ENCODE measurements at regions of chr3 and their contacts with region 1.

Region 1: DNA sequence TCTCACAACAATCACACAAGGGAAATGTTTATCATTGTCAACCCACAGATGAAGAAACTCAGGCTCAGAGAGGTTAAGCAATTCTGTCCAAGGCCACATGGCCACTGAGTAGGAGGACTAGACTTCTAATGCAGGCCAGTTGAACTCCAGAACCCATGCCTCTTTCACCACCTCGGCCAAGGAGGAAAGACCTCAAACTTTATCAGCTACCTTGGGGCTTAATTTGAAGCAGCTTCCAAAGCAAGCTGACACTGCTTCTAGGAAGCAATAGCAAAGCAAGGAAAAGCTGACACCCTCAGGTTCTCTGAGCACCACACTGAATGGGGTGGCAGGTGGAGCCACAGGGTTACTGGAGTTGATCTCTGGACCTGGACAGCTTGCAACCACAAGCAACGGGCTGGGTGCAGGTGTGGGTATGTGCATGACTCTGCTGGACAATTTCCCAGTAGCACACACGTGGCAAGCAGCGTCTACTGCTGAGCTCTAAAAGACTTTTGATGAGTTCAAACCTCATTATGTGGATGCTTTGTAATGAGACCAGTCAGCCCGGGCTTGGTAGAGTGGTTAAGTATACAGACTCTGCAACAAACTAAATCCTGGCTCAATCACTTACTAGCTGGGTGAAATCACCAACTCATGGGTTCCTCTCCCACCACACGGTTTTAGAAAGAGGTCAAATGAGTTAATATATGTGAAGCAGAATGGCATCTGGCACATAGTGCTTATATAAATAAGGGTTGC is 23.1 kb downstream of the CCNL1 start:
- DNase-seq: no peak
- H3K4me3 ChIP-seq: no peak overlapping the region
- H3K27ac ChIP-seq: no peak overlapping the region
- H3K4me1 ChIP-seq: peaks cover 4 to 27% of the 10 kb centered on the region in 2 experiments; a peak in 3 of 4 replicates
- H3K27me3 ChIP-seq: no peaks in the 10 kb centered on the region
- CTCF ChIP-seq: no peak
- EP300 ChIP-seq: no peak
- RAD21 ChIP-seq: no peak

Region 2: GRCh38 chr3:155995525-155996351 is 1141.1 kb before region 1 on chr3:
- CTCF ChIA-PET with region 1: interaction called, 10 read pairs
- POLR2A ChIA-PET with region 1: no interaction called
- DNase-seq: peak; percentile 54
- H3K4me3 ChIP-seq: no peak overlapping the region; a peak in 1 of 4 replicates
- H3K27ac ChIP-seq: no peak overlapping the region
- H3K4me1 ChIP-seq: no peaks in the 10 kb centered on the region; a peak in 1 of 4 replicates
- H3K27me3 ChIP-seq: no peaks in the 10 kb centered on the region
- CTCF ChIP-seq: peak; percentile 69
- EP300 ChIP-seq: no peak
- RAD21 ChIP-seq: peak; percentile 80

Region 3: GRCh38 chr3:157088601-157089454 is 48.0 kb before region 1 on chr3:
- CTCF ChIA-PET with region 1: interaction called, 40 read pairs
- POLR2A ChIA-PET with region 1: interaction called, 3 read pairs
- DNase-seq: peak; percentile 99
- H3K4me3 ChIP-seq: peak overlapping the region; percentile 67 to 71
- H3K27ac ChIP-seq: peak overlapping the region; percentile 95 to 99
- H3K4me1 ChIP-seq: peaks cover 15 to 31% of the 10 kb centered on the region in 2 experiments
- H3K27me3 ChIP-seq: no peaks in the 10 kb centered on the region
- CTCF ChIP-seq: no peak; the same call in none of the 2 replicates
- EP300 ChIP-seq: peak in 1 of 2 experiments; percentile 30; a peak in 1 of 4 replicates
- RAD21 ChIP-seq: no peak

Region 4: DNA sequence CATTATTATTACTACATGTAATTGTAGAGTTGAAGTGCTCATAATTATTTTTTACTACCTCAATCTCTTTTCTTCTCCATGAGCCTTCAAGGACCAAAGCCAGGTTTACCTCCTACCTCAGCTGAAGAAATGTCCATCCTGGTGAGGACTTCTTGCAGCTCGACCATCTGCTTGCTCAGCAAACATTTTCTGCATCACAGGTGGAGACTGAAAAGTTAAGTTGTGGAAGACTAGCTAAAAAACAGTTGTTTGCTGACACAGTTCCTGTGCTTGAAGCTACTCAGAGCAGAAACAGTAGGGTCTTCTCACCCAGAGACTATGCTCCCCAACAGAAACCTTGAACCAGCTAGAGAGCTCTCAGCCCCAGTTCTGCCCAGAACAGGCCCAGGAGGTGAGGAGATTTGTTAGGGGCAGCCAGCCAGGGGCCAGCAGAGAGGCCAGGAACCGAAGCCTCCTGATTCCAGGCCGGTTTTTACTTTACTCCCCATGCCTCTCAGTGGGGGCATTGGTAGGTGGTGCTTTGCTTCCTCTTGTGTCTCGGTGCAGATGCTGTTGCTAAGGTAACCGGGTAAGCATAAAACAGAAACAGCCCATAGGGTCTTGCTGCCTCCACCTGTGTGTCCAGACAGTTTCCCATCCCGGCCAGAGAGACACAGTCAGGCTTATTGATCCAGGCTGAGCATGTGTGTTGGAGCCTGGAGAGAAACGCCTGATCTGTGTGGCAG is 31.7 kb before region 1 on chr3:
- CTCF ChIA-PET with region 1: interaction called, 26 read pairs
- POLR2A ChIA-PET with region 1: no interaction called
- DNase-seq: no peak
- H3K4me3 ChIP-seq: no peak overlapping the region
- H3K27ac ChIP-seq: no peak overlapping the region
- H3K4me1 ChIP-seq: peaks cover 0 to 20% of the 10 kb centered on the region in 2 experiments; a peak in 1 of 4 replicates
- H3K27me3 ChIP-seq: no peaks in the 10 kb centered on the region
- CTCF ChIP-seq: no peak
- EP300 ChIP-seq: no peak
- RAD21 ChIP-seq: no peak

Region 5: DNA sequence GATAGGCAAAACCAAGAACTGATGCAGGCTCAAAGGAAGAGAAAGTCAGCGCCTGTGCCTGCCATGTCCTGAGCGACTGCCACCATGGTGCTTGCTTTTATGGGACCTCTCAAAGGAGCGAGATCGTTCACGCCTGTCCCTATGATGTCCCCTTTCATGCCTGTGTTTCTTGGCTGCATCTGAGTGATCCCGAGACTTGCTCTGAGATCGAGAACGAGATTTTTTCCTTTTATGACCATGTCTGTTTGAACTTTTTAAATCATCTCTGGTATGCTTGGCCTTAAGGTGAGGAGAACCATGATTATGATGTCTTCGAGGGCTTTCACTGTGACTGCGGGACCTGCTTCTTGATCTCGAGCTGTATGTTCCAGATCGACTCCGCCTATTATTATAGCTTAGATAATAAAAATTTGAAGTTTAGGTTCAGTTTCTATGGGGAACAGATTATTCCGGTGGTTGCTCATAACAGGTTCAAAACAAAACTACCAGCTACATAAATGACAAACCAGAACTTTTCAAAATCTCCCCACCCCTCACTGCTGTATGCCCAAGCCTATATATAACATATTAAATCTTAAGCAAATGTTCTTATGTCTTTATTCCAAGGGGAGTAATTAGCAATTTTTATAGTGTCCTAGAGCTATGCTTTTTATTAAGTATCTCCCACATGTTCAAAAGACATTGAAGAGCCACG is 11.5 kb after region 1 on chr3:
- CTCF ChIA-PET with region 1: interaction called, 54 read pairs
- POLR2A ChIA-PET with region 1: interaction called, 3 read pairs
- DNase-seq: no peak
- H3K4me3 ChIP-seq: no peak overlapping the region
- H3K27ac ChIP-seq: no peak overlapping the region
- H3K4me1 ChIP-seq: no peaks in the 10 kb centered on the region
- H3K27me3 ChIP-seq: no peaks in the 10 kb centered on the region
- CTCF ChIP-seq: no peak
- EP300 ChIP-seq: no peak
- RAD21 ChIP-seq: no peak

Region 6: GRCh38 chr3:157195965-157196364 is 59.1 kb after region 1 on chr3:
- CTCF ChIA-PET with region 1: no interaction called
- POLR2A ChIA-PET with region 1: no interaction called
- DNase-seq: no peak
- H3K4me3 ChIP-seq: no peak overlapping the region
- H3K27ac ChIP-seq: no peak overlapping the region
- H3K4me1 ChIP-seq: no peaks in the 10 kb centered on the region
- H3K27me3 ChIP-seq: no peaks in the 10 kb centered on the region
- CTCF ChIP-seq: no peak
- EP300 ChIP-seq: no peak
- RAD21 ChIP-seq: no peak

Measured in SK-N-SH (cell line).